HCT116 (cell line): ENCODE measurements at regions of chr15 and their contacts with region 1.

Region 1: GRCh38 chr15:98933406-98933805 is 74.2 kb downstream of the PGPEP1L start:
- DNase-seq: no peak
- ATAC-seq: no peak
- H3K4me3 ChIP-seq: no peak overlapping the region
- H3K27ac ChIP-seq: no peak overlapping the region
- H3K4me1 ChIP-seq: no peaks in the 10 kb centered on the region
- H3K27me3 ChIP-seq: no peaks in the 10 kb centered on the region
- CTCF ChIP-seq: no peak
- POLR2A ChIP-seq: no peak
- RAD21 ChIP-seq: no peak

Region 2: GRCh38 chr15:98881526-98882520 is 51.6 kb before region 1 on chr15:
- CTCF ChIA-PET with region 1: no interaction called
- POLR2A ChIA-PET with region 1: no interaction called
- RAD21 ChIA-PET with region 1: no interaction called
- intact Hi-C with region 1: loop called (anchors 2 kb)
- DNase-seq: peak; percentile 31
- ATAC-seq: peak; percentile 84
- H3K4me3 ChIP-seq: no peak overlapping the region
- H3K27ac ChIP-seq: no peak overlapping the region
- H3K4me1 ChIP-seq: no peaks in the 10 kb centered on the region; a peak in 1 of 4 replicates
- H3K27me3 ChIP-seq: no peaks in the 10 kb centered on the region
- CTCF ChIP-seq: peak; percentile 51 to 68 (median 66); a peak in 5 of 6 replicates
- POLR2A ChIP-seq: no peak
- RAD21 ChIP-seq: peak; percentile 76

Region 3: GRCh38 chr15:98920091-98920880 is 13.1 kb before region 1 on chr15:
- CTCF ChIA-PET with region 1: no interaction called
- POLR2A ChIA-PET with region 1: no interaction called
- RAD21 ChIA-PET with region 1: no interaction called
- intact Hi-C with region 1: no loop called
- DNase-seq: no peak
- ATAC-seq: no peak
- H3K4me3 ChIP-seq: no peak overlapping the region
- H3K27ac ChIP-seq: no peak overlapping the region
- H3K4me1 ChIP-seq: no peaks in the 10 kb centered on the region
- H3K27me3 ChIP-seq: no peaks in the 10 kb centered on the region
- CTCF ChIP-seq: no peak
- POLR2A ChIP-seq: no peak
- RAD21 ChIP-seq: no peak

Region 4: DNA sequence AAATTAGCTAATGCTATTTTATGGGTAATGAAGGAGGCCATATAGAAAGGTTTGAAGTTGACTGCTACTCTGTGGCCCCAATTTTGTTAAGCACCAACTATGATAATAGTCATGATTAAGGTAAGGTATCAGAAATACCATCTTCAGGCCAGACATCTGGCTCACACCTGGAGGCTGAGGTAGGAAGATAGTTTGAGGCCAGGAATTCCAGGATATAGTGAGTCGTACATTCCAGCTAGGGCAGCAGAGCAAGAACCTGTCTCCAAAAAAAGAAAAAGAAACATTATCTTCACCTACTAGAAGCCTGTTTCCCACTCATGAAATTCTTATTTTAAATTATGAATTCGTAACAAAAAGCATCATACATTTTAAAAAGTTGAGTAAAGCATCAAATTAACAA is 382.2 kb after region 1 on chr15:
- CTCF ChIA-PET with region 1: no interaction called
- POLR2A ChIA-PET with region 1: no interaction called
- RAD21 ChIA-PET with region 1: no interaction called
- intact Hi-C with region 1: no loop called
- DNase-seq: peak; percentile 22
- ATAC-seq: peak; percentile 80
- H3K4me3 ChIP-seq: no peak overlapping the region
- H3K27ac ChIP-seq: no peak overlapping the region
- H3K4me1 ChIP-seq: peaks cover 0 to 9% of the 10 kb centered on the region in 2 experiments; a peak in 2 of 4 replicates
- H3K27me3 ChIP-seq: no peaks in the 10 kb centered on the region
- CTCF ChIP-seq: no peak
- POLR2A ChIP-seq: no peak
- RAD21 ChIP-seq: no peak